Left cardiac atrium (tissue), 4 donors: ENCODE measurements at regions of chr11 and their contacts with region 1.

Region 1: GRCh38 chr11:9137293-9138132 is 46.1 kb upstream of the SCUBE2 start:
- DNase-seq: peak; percentile 67
- ATAC-seq: peak; percentile 89 to 92

Region 2: DNA sequence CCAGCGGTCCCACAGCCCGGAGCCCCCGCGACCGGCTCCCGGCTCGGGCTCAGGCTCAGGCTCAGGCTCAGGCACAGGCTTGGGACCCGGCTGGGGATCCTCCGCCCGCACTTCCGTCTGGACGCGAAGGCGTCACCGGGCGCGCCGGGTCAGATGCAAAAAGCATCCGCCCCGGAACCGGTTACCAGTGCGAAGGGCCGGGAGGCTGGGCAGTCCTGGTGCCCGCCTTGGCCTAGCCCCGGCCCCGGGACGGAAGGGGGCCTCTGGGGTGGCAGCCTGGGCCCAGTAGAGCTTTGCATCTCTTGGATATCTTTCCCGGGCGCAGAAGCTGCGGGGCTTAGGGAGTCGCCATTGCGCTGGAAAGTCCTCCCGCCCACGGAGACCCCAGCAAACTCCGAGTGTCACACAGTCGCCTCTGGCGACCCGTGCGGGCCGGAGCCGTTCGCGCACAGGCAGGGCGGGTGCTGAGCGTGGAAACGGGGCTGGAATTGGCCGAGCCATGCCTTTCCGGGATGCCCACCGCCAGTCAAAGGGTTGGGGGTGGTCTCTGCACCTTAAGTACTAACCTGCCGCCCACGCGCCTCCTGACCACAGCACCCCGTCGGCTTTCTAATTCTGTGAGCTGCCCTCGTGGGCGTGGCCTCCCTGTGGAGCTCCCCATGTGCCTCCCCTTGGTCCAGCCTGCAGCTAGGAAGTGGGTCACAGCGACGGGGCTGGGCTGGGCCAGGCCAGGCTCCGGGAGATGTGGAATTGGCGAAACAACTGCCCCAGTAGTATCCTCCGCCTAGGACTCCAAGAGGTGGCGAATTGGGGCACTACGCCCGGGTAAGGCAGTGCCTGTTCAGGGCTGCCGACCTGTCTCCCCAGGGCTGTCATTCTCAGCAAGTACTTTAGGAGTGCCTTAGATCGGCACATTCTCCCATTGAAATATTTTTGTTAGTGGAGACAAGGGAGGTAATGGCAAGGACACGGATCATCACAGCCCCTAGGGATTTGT is 172.9 kb before region 1 on chr11 and contains the start of gene TMEM9B:
- intact Hi-C with region 1: no loop called
- DNase-seq: peak; percentile 95
- ATAC-seq: peak; percentile 95 to 98
- total RNA-seq, gene TMEM9B: 35.9 to 45.9 TPM

Region 3: GRCh38 chr11:9015677-9016076 is 121.8 kb before region 1 on chr11:
- intact Hi-C with region 1: loop called (anchors 2 to 10 kb)
- DNase-seq: peak; percentile 64
- ATAC-seq: peak; percentile 71